ENCODE measurements at regions of chr9 and their contacts with region 1.

Region 1: DNA sequence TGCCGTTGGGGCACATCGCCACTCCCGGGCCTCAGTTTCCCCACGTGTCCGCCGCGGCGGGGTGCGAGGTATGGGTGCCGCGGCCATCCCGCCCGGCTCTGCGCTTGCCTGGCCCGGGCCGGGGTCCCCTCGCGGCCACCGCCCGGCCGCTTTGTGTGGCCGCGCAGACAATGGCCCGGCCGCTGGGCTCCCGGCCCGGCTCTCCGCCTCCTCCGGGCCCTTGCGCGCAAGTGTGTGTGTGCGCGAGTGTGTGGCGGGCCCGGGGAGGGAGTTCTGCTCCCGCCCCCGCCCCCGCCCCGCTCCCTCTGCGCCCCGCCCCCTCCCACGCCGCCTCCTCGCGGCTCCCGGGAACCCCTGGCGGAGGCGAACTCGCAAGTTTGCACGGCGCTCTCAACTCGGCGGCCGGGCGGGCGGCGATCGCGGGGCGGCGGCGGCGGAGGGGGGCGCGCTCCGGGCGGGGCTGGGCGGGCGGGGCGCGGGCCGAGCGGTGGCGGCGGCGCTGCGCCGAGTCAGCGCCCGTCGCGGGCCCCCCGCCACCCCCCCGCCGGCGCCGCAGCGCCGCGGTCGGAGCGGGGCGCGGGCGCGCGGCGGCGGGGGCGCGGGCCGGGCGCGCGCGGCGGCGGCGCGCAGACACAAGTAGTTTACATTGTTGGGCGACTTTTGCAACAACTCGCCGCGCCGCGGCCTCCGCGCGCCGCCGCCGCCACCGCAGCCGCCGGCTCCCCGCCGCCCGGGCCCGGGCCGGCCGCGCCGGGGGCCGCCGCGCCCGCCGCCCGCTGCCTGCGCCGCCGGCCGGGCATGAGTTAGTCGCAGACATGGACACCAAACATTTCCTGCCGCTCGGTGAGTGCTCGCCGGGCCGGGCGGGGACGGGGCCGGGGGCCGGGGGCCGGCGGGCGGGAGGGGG is at the start of gene RXRA:
- DNase-seq: peak; percentile 58 to 93
- H3K4me3 ChIP-seq: peak within 1 kb of the TSS; percentile 87
- H3K27ac ChIP-seq: peak within 1 kb of the TSS; percentile 66
- H3K4me1 ChIP-seq: peaks cover 32% of the 10 kb centered on the region
- H3K27me3 ChIP-seq: no peaks in the 10 kb centered on the region
- CTCF ChIP-seq: no peak
- total RNA-seq, gene RXRA: 116 and 146 TPM in 2 replicates

Region 2: GRCh38 chr9:133992780-133993634 is 333.1 kb before region 1 on chr9:
- CTCF ChIA-PET with region 1: no interaction called
- POLR2A ChIA-PET with region 1: no interaction called
- intact Hi-C with region 1: no loop called
- DNase-seq: peak; percentile 66 to 82
- H3K4me3 ChIP-seq: peak overlapping the region; percentile 98
- H3K27ac ChIP-seq: peak overlapping the region; percentile 65
- H3K4me1 ChIP-seq: peaks cover 17% of the 10 kb centered on the region
- H3K27me3 ChIP-seq: no peaks in the 10 kb centered on the region
- CTCF ChIP-seq: peak; percentile 63

Region 3: GRCh38 chr9:134163353-134164196 is 162.5 kb before region 1 on chr9:
- CTCF ChIA-PET with region 1: no interaction called
- POLR2A ChIA-PET with region 1: no interaction called
- intact Hi-C with region 1: loop called (anchors 1 kb)
- DNase-seq: peak; percentile 50 to 67
- H3K4me3 ChIP-seq: no peak overlapping the region
- H3K27ac ChIP-seq: no peak overlapping the region
- H3K4me1 ChIP-seq: peaks cover 6% of the 10 kb centered on the region
- H3K27me3 ChIP-seq: no peaks in the 10 kb centered on the region
- CTCF ChIP-seq: peak; percentile 34; the same call in 1 of the 2 replicates

Region 4: DNA sequence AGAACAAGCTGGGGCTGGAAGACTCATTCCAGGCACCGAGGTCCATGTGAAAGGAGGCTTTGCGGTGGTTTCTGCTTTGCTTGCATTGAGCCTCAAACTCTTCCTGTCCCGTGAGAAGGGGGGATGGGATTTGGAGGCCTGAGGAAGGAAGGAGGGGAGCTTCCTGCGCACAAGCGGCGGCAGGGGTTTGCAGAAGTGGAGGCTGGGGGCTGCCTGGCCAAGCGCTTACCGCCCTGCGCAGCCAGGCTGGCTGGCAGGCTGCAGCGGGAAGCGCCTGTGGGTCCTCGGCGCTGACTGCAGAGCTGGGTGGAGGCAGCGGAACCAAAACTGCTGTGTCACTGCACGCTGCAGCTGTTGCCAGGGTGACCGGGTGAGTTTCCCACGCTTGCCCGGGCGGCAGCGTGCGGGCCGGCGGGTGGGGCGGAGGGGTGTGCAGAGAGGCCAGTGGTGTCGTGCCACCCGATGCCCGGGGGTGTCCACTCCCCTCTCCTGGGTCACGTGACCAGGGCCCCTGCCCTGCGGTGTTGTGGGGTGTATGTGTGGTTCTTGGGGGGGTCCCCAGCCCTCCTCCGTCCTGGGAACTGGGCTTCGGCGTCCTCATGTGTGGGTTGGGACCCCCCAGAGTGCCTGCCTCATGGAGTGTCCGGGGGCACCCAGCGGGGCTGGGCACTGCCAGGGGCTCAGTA is 81.2 kb after region 1 on chr9:
- CTCF ChIA-PET with region 1: interaction called, 4 read pairs
- POLR2A ChIA-PET with region 1: interaction called, 3 read pairs
- intact Hi-C with region 1: loop called (anchors 1 kb)
- DNase-seq: peak; percentile 89 to 98
- H3K4me3 ChIP-seq: peak overlapping the region; percentile 47
- H3K27ac ChIP-seq: peak overlapping the region; percentile 97
- H3K4me1 ChIP-seq: peaks cover 79% of the 10 kb centered on the region
- H3K27me3 ChIP-seq: no peaks in the 10 kb centered on the region
- CTCF ChIP-seq: no peak

Region 5: GRCh38 chr9:135050072-135050990 is 724.3 kb after region 1 on chr9:
- CTCF ChIA-PET with region 1: no interaction called
- POLR2A ChIA-PET with region 1: no interaction called
- intact Hi-C with region 1: no loop called
- DNase-seq: no peak
- H3K4me3 ChIP-seq: no peak overlapping the region
- H3K27ac ChIP-seq: no peak overlapping the region
- H3K4me1 ChIP-seq: no peaks in the 10 kb centered on the region
- H3K27me3 ChIP-seq: peaks cover 98% of the 10 kb centered on the region
- CTCF ChIP-seq: no peak